Endothelial cell of umbilical vein (primary cell): ENCODE measurements at regions of chr10 and their contacts with region 1.

Region 1: DNA sequence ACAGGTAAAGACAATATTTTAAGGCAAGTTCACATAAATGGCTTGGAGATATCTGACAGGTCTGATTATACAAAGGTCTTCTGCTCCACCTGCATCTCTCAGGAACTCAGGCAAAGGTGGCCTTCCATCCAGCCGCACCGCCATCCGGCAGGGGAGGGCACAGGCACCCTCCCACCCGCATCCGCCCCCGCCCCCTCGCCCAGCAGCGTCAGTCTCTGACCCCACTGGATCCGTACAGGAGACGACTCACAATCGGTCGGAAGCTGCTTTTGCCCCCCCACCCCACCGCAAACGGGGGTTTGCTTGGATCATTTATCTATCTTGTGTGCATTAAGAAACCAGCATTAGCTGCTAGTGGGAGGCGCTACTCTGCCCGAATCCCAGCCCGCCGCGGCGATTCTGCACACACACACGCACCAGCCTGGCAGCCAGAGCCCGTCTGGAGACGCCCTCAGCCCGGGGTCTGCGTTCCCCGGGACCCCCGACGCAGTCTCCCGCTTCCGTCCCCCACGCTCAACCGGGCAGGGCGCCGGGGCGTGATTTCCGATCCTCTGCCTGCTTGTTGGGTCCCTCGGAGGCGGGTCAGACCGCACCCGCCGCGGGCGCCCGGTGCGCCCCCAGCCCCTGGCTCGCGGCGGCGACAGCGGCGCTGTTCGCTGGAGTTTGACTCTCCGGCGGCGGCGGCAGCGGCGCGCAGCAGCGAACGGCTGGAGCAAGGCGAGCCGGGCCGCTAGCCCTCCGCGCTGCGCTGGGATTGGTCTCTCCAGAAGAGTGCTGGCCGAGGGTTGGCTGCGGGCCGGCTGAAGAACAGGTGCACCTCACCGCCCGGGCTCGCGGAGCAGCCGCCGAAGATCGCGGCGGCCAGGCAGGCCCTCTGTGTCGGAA is 820 bp upstream of the NRG3 start:
- DNase-seq: peak; percentile 78
- H3K4me3 ChIP-seq: peak overlapping the region; percentile 16 to 52 (median 49)
- H3K27ac ChIP-seq: no peak overlapping the region
- H3K4me1 ChIP-seq: peaks cover 16% of the 10 kb centered on the region
- H3K27me3 ChIP-seq: peaks cover 3 to 9% of the 10 kb centered on the region in 2 experiments
- CTCF ChIP-seq: peak; percentile 2 to 4
- POLR2A ChIP-seq: no peak

Region 2: GRCh38 chr10:81920213-81920829 is 46.1 kb after region 1 on chr10:
- CTCF ChIA-PET with region 1: no interaction called
- POLR2A ChIA-PET with region 1: no interaction called
- dilution Hi-C with region 1: no loop called
- intact Hi-C with region 1: loop called (anchors 2 kb)
- DNase-seq: peak; percentile 10
- H3K4me3 ChIP-seq: no peak overlapping the region
- H3K27ac ChIP-seq: no peak overlapping the region
- H3K4me1 ChIP-seq: no peaks in the 10 kb centered on the region
- H3K27me3 ChIP-seq: no peaks in the 10 kb centered on the region
- CTCF ChIP-seq: peak; percentile 78 to 80
- POLR2A ChIP-seq: no peak

Region 3: DNA sequence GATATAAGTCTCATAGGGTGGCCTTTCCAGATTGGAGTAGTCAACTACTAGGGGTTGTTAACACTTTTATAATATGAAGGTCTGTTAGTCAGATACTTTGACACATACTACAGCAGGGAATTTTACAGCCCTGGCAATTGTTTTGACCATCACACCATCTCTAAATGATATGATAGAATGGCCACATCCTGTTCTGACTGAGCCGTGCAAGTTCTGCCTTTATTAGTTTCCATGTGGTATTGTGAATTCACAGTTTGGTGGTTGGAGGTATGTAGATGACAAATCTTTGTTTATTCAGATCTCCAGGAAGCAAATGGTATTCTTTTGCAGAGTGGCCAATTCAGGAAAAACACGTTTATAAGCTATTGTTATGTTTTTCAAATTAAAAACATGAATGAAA is 83.8 kb after region 1 on chr10:
- CTCF ChIA-PET with region 1: no interaction called
- POLR2A ChIA-PET with region 1: no interaction called
- dilution Hi-C with region 1: no loop called
- intact Hi-C with region 1: loop called (anchors 2 kb)
- DNase-seq: peak; percentile 94
- H3K4me3 ChIP-seq: no peak overlapping the region
- H3K27ac ChIP-seq: peak overlapping the region; percentile 75
- H3K4me1 ChIP-seq: peaks cover 46% of the 10 kb centered on the region
- H3K27me3 ChIP-seq: no peaks in the 10 kb centered on the region
- CTCF ChIP-seq: no peak
- POLR2A ChIP-seq: no peak

Region 4: GRCh38 chr10:81978238-81978637 is 104.1 kb after region 1 on chr10:
- CTCF ChIA-PET with region 1: no interaction called
- POLR2A ChIA-PET with region 1: no interaction called
- dilution Hi-C with region 1: no loop called
- intact Hi-C with region 1: no loop called
- DNase-seq: peak; percentile 42
- H3K4me3 ChIP-seq: no peak overlapping the region
- H3K27ac ChIP-seq: no peak overlapping the region
- H3K4me1 ChIP-seq: peaks cover 8% of the 10 kb centered on the region
- H3K27me3 ChIP-seq: no peaks in the 10 kb centered on the region
- CTCF ChIP-seq: no peak
- POLR2A ChIP-seq: no peak